ENCODE measurements at regions of chr1 and their contacts with region 1.

Region 1: GRCh38 chr1:199657428-199657827 is 370.1 kb upstream of the NR5A2 start:
- DNase-seq: no peak
- ATAC-seq: no peak
- H3K4me3 Mint-ChIP-seq: no peak overlapping the region
- H3K27ac Mint-ChIP-seq: no peak overlapping the region
- H3K4me1 Mint-ChIP-seq: no peaks in the 10 kb centered on the region
- H3K27me3 Mint-ChIP-seq: peaks cover 7% of the 10 kb centered on the region

Region 2: DNA sequence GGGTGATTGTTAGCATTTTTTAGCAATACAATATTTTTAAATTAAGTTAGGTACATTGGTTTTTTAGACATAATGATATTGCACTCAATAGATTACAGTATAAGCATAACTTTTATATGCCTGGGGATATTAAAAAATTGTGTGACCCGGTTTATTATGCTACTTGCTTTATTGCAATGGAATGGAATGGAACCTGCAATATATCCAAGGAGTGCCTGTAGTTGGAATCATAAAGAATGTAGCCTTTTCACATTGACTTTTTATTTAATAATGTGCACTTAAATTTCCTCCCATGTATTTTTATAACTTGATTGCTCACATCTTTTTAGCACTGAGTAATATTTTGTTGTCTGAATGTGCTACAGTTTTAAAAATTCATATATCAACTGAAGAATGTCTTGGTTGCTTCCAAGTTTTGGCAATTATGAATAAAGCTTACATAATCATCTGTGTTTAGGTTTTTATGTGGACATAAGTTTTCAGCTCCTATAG is 1130.5 kb after region 1 on chr1:
- CTCF ChIA-PET with region 1: no interaction called
- POLR2A ChIA-PET with region 1: interaction called, 11 read pairs
- intact Hi-C with region 1: no loop called
- DNase-seq: no peak
- ATAC-seq: no peak
- H3K4me3 Mint-ChIP-seq: no peak overlapping the region
- H3K27ac Mint-ChIP-seq: no peak overlapping the region
- H3K4me1 Mint-ChIP-seq: no peaks in the 10 kb centered on the region
- H3K27me3 Mint-ChIP-seq: no peaks in the 10 kb centered on the region